Right ventricle myocardium inferior (tissue), 1 donor: ENCODE measurements at regions of chr3 and their contacts with region 1.

Region 1: DNA sequence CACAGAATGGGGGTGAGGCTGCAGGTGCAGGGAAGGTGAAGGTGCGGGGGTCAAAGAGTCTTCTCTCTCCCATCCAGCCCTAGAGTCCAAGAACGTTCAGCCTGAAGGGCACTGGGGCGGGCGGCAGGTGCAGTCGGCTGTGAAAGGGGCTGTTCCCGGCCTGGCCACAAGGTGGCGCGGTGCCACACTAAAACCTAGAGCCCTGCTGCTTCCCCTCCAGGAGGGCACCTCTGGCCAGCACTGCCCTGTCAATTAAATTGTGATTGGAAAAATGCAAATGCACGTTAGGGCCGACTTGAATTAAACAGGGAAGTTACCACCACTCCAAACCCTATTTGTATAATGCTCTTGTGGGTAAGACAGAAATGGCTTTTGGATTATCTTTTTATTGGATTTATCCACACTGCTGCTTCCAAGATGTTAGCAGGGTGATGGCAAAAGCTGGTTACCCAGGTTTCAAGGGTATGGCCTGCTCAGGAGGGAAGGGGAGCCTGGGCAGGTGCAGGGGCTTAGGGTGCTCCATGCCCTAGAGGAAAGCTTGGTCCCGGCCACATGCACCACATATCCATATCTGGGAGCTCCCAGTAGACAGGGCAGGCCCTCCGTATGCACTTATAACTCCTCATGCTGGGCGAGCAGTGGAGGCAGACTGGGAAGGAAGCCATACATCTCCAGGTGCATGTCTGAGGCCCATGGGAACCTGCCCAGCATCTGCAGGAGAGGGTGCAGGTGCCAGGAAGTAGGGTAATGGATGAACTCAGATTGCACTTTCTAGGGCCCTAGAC is 119.8 kb downstream of the ADCY5 start:
- DNase-seq: peak; percentile 88
- ATAC-seq: peak; percentile 57

Region 2: DNA sequence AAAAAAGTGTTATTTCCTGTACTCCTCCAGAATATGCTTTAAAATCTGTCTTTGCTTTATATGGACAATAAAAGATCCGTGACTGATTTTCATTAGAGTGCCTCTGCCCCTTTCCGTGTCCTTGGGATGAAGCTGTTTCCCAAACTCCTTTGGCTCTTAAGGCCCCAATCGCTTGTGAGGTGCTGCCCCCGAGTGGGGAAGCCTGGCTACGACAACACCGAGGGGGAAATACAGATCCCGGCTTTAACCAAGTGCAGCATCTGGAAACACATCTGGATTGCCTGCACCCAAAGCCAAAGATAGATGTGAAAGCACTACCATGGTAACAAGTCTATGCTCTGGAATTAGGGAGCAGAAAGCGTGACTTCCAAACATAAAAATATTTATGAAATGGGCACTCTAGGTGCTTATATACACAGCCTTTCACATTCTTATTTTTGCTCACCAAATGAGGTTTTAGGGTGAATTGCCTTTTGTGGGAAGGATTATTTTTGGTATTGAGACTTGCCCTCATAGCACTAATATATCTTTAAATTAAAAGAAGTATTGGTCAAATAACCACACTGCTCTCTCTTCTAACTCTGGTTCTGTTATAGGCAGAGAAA is 160.5 kb after region 1 on chr3:
- intact Hi-C with region 1: loop called (anchors 1 kb)
- DNase-seq: peak; percentile 78
- ATAC-seq: peak; percentile 81

Region 3: GRCh38 chr3:123559040-123559861 is 230.2 kb after region 1 on chr3:
- intact Hi-C with region 1: loop called (anchors 2 kb)
- DNase-seq: no peak
- ATAC-seq: no peak